Heart left ventricle (tissue), 16 donors: ENCODE measurements at regions of chrX and their contacts with region 1.

Region 1: DNA sequence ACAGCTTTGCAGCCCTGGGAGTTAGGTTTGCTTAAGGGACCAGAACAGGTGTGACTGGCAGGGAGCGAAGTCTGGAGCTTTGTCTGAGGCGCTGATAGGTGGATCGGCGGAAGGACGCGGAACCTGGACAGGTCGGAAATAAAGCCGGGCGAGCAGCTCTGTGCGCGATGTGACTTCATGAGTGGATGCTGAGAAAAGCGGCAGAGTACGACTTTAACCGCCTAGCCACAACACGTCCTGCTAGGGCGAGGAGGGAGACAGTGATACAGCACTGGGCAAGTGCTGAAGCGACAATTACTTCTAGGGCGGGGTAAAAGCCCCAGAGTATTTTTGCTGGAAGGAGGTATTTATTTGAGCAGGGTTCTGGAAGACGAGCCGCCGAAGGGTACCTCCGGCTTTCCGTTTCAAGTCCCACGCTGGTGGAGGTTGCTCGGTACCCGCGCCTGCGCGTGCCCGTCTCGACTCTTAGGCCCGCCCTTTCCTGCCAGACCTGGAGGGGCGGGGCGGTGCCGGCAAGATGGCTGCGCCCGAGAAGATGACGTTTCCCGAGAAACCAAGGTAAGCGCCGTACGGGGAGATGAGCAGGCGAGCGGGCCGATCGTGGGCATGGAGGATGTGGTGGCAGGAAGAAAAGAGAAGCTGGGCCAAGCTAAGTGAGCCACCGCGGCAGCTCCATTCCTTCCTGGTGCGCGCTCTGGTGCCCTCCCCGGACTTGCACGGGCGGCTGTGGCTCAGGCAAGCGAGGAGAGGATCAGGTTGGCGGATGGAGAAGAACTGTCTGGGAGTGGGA is at the start of gene ZRSR2:
- DNase-seq: peak; percentile 77 to 90 (median 87)
- ATAC-seq: peak; percentile 96 to 99 (median 99)
- H3K4me3 ChIP-seq: peak within 1 kb of the TSS; percentile 62 to 96 (median 75)
- H3K27ac ChIP-seq: peak within 1 kb of the TSS; percentile 44 to 95 (median 80)
- H3K4me1 ChIP-seq: peaks cover 0 to 45% (median 4%) of the 10 kb centered on the region in 12 donors
- H3K27me3 ChIP-seq: no peaks in the 10 kb centered on the region
- CTCF ChIP-seq: no peak
- POLR2A ChIP-seq: no peak
- total RNA-seq, gene ZRSR2: 3.1 to 11.1 (median 7.5) TPM

Region 2: DNA sequence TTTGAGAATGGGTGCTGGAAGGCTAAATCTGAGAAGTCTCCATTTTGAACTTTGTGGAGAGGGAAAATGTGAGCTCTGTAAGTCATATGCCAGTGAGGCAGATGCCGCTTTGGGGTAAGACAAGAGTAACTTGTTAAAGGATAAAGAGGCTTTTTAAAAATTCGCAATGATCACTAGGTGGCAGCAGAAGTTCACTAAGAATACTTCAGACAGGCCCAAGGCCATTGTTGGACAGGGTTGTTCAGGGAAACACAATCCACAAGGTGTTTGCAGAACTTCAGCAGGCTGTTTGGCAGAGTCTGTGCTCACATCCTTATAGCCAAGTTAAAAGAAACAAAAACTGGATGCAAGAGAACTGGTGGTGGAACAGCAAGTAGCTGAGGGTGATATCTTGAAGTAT is 441.1 kb before region 1 on chrX:
- intact Hi-C with region 1: no loop called
- DNase-seq: peak in 4 of 5 donors; percentile 18 to 34 (median 27)
- ATAC-seq: peak; percentile 76 to 88 (median 82)
- H3K4me3 ChIP-seq: no peak overlapping the region
- H3K27ac ChIP-seq: no peak overlapping the region
- H3K4me1 ChIP-seq: no peaks in the 10 kb centered on the region
- H3K27me3 ChIP-seq: peaks cover 0 to 10% (median 0%) of the 10 kb centered on the region in 9 donors
- CTCF ChIP-seq: peak; percentile 33 to 61 (median 49)
- POLR2A ChIP-seq: no peak

Region 3: GRCh38 chrX:15686818-15687685 is 103.1 kb before region 1 on chrX:
- intact Hi-C with region 1: loop called in 3 of 10 experiments (anchors 5 to 10 kb)
- DNase-seq: peak in 3 of 5 donors; percentile 34 to 41 (median 36)
- ATAC-seq: peak in 3 of 4 donors; percentile 69 to 86 (median 82)
- H3K4me3 ChIP-seq: no peak overlapping the region
- H3K27ac ChIP-seq: no peak overlapping the region
- H3K4me1 ChIP-seq: peaks cover 0 to 7% (median 0%) of the 10 kb centered on the region in 12 donors
- H3K27me3 ChIP-seq: no peaks in the 10 kb centered on the region
- CTCF ChIP-seq: peak; percentile 60 to 88 (median 67)
- POLR2A ChIP-seq: no peak

Region 4: DNA sequence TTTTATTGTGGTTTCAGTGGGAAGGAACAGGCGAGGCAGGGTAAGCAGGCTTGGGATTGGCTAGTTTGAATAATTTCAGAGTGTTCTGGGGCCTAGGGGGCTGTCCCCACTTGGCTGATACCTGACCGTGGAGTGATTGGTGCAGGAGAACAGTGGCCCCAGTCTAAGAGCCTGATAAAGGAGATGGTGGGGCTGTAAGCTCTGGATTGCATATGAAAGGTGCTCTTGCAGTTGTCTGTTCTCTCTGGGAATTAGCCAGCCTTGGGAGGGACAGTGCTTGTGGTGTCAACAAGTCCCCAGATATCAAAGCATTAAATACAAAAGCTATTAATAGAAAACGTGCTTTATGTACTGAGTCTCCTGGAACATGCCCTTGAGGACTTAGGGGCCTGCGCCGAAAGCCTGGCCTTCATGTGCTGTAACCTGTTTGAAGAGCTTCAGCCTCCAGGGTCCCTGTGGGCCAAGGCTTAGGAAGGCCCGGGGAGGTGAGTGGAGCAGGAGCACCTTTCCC is 95.2 kb before region 1 on chrX:
- intact Hi-C with region 1: loop called in 1 of 10 experiments (anchors 10 kb)
- DNase-seq: peak in 3 of 5 donors; percentile 20 to 58 (median 56)
- ATAC-seq: peak; percentile 92 to 95 (median 94)
- H3K4me3 ChIP-seq: no peak overlapping the region
- H3K27ac ChIP-seq: peak overlapping the region in 11 of 12 donors; percentile 31 to 86 (median 71)
- H3K4me1 ChIP-seq: peaks cover 0 to 9% (median 0%) of the 10 kb centered on the region in 12 donors
- H3K27me3 ChIP-seq: no peaks in the 10 kb centered on the region
- CTCF ChIP-seq: no peak
- POLR2A ChIP-seq: no peak

Region 5: GRCh38 chrX:16185725-16186136 is 395.6 kb after region 1 on chrX:
- intact Hi-C with region 1: no loop called
- DNase-seq: no peak
- ATAC-seq: no peak
- H3K4me3 ChIP-seq: no peak overlapping the region
- H3K27ac ChIP-seq: no peak overlapping the region
- H3K4me1 ChIP-seq: no peaks in the 10 kb centered on the region
- H3K27me3 ChIP-seq: peaks cover 0 to 30% (median 0%) of the 10 kb centered on the region in 9 donors
- CTCF ChIP-seq: no peak
- POLR2A ChIP-seq: no peak

Region 6: DNA sequence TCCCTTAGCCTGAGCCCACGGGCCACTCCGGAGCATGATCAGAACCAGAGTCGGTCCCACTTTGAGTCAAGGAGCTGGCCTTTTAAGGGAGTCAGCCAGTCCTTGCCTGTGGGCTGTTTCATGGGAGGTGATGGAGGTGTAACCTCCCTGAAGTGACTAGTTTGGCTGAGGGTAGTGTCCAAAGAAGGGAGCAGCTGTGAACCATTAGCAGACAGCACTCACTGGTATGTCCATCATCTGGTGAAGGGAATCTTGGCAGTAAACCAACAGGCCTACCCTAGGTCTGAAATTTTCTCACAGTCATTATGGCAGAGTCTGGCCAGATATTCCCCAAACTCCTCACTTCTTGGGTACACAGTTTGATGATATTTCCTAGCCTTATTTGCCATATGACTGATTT is 1144.0 kb after region 1 on chrX:
- intact Hi-C with region 1: no loop called
- DNase-seq: no peak
- ATAC-seq: no peak
- H3K4me3 ChIP-seq: no peak overlapping the region
- H3K27ac ChIP-seq: no peak overlapping the region
- H3K4me1 ChIP-seq: no peaks in the 10 kb centered on the region
- H3K27me3 ChIP-seq: peaks cover 0 to 22% (median 0%) of the 10 kb centered on the region in 9 donors
- CTCF ChIP-seq: no peak
- POLR2A ChIP-seq: no peak